Vagina (tissue), 2 donors: ENCODE measurements at regions of chr2 and their contacts with region 1.

Region 1: DNA sequence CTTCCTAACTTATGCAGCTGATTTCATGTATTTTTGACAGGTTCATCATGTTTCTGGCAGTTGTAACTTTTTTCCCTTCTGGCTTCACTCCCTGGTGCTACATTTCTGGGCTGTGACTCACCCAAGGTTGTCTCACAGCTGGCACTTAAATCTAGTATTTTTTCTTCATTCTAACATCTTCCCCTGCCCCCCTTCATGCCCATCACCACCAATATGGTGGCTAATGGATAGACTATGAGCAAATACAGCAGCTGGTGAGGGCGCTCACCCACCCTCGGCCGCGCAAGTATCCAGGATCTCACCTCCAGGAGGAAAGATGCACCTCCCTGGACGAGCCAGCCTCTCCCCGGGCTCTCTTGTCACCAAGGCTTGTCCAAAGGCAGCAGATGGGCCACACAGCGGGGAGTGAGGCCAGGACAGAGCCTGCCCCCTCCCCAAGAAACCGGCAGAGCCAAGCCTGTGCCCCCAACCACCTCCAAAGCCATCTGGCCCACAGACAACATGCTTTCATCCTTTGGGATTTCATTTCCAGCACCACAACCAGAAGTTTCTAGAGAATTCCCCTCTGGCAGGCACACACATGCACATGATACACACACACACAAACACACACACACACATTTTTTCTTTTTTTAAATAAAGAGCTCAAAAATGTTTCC is 39.1 kb downstream of the ATOH8 start:
- DNase-seq: no peak
- H3K4me3 ChIP-seq: no peak overlapping the region
- H3K27ac ChIP-seq: peak overlapping the region; percentile 72
- H3K4me1 ChIP-seq: peaks cover 68% of the 10 kb centered on the region
- H3K27me3 ChIP-seq: no peaks in the 10 kb centered on the region
- CTCF ChIP-seq: no peak
- POLR2A ChIP-seq: no peak

Region 2: GRCh38 chr2:85682378-85682777 is 110.5 kb before region 1 on chr2:
- intact Hi-C with region 1: no loop called
- DNase-seq: no peak
- H3K4me3 ChIP-seq: no peak overlapping the region
- H3K27ac ChIP-seq: no peak overlapping the region
- H3K4me1 ChIP-seq: peaks cover 12% of the 10 kb centered on the region
- H3K27me3 ChIP-seq: no peaks in the 10 kb centered on the region
- CTCF ChIP-seq: no peak
- POLR2A ChIP-seq: no peak

Region 3: GRCh38 chr2:85737481-85737880 is 55.4 kb before region 1 on chr2:
- intact Hi-C with region 1: loop called (anchors 5 kb)
- DNase-seq: peak in 1 of 2 donors; percentile 95
- H3K4me3 ChIP-seq: no peak overlapping the region
- H3K27ac ChIP-seq: peak overlapping the region; percentile 93
- H3K4me1 ChIP-seq: peaks cover 68% of the 10 kb centered on the region
- H3K27me3 ChIP-seq: no peaks in the 10 kb centered on the region
- CTCF ChIP-seq: no peak
- POLR2A ChIP-seq: no peak

Region 4: GRCh38 chr2:85750587-85751575 is 42.0 kb before region 1 on chr2:
- intact Hi-C with region 1: loop called (anchors 5 kb)
- DNase-seq: no peak
- H3K4me3 ChIP-seq: no peak overlapping the region
- H3K27ac ChIP-seq: peak overlapping the region; percentile 42
- H3K4me1 ChIP-seq: peaks cover 64% of the 10 kb centered on the region
- H3K27me3 ChIP-seq: no peaks in the 10 kb centered on the region
- CTCF ChIP-seq: peak; percentile 46 to 70 (median 52)
- POLR2A ChIP-seq: no peak

Region 5: GRCh38 chr2:86298411-86299379 is 505.8 kb after region 1 on chr2:
- intact Hi-C with region 1: no loop called
- DNase-seq: peak in 1 of 2 donors; percentile 8
- H3K4me3 ChIP-seq: no peak overlapping the region
- H3K27ac ChIP-seq: no peak overlapping the region
- H3K4me1 ChIP-seq: peaks cover 24% of the 10 kb centered on the region
- H3K27me3 ChIP-seq: no peaks in the 10 kb centered on the region
- CTCF ChIP-seq: no peak
- POLR2A ChIP-seq: no peak